Activated B cell treated with CpG ODN at 0.5 μM for 24 hours (primary cell): ENCODE measurements at regions of chr7 and their contacts with region 1.

Region 1: GRCh38 chr7:149838224-149838947 is at the start of gene ZNF862:
- DNase-seq: peak; percentile 89
- ATAC-seq: peak; percentile 97
- H3K4me3 Mint-ChIP-seq: peak within 1 kb of the TSS; percentile 88
- H3K27ac Mint-ChIP-seq: peak within 1 kb of the TSS; percentile 82
- H3K4me1 Mint-ChIP-seq: peaks cover 20% of the 10 kb centered on the region
- H3K27me3 Mint-ChIP-seq: peaks cover 16% of the 10 kb centered on the region
- CTCF ChIP-seq: no peak
- total RNA-seq, gene ZNF862: 12.6 and 17.6 TPM in 2 replicates

Region 2: GRCh38 chr7:149239345-149240191 is 598.8 kb before region 1 on chr7 and contains the start of gene ZNF212:
- CTCF ChIA-PET with region 1: no interaction called
- POLR2A ChIA-PET with region 1: no interaction called
- intact Hi-C with region 1: loop called (anchors 1 kb)
- DNase-seq: peak; percentile 82
- ATAC-seq: peak; percentile 99
- H3K4me3 Mint-ChIP-seq: peak within 1 kb of the TSS; percentile 91
- H3K27ac Mint-ChIP-seq: peak within 1 kb of the TSS; percentile 76
- H3K4me1 Mint-ChIP-seq: peaks cover 37% of the 10 kb centered on the region
- H3K27me3 Mint-ChIP-seq: no peaks in the 10 kb centered on the region
- CTCF ChIP-seq: no peak
- total RNA-seq, gene ZNF212: 17.0 and 21.0 TPM in 2 replicates

Region 3: GRCh38 chr7:149497456-149498261 is 340.7 kb before region 1 on chr7 and contains the start of gene ZNF746:
- CTCF ChIA-PET with region 1: no interaction called
- POLR2A ChIA-PET with region 1: no interaction called
- intact Hi-C with region 1: loop called (anchors 2 kb)
- DNase-seq: peak; percentile 79
- ATAC-seq: peak; percentile 96
- H3K4me3 Mint-ChIP-seq: peak within 1 kb of the TSS; percentile 92
- H3K27ac Mint-ChIP-seq: peak within 1 kb of the TSS; percentile 82
- H3K4me1 Mint-ChIP-seq: peaks cover 24% of the 10 kb centered on the region
- H3K27me3 Mint-ChIP-seq: peaks cover 2% of the 10 kb centered on the region
- CTCF ChIP-seq: no peak
- total RNA-seq, gene ZNF746: 21.0 and 28.4 TPM in 2 replicates

Region 4: GRCh38 chr7:149771721-149772240 is 66.6 kb before region 1 on chr7:
- CTCF ChIA-PET with region 1: no interaction called
- POLR2A ChIA-PET with region 1: interaction called, 8 read pairs
- intact Hi-C with region 1: loop called (anchors 1 kb)
- DNase-seq: peak; percentile 84
- ATAC-seq: peak; percentile 97
- H3K4me3 Mint-ChIP-seq: peak overlapping the region; percentile 80
- H3K27ac Mint-ChIP-seq: no peak overlapping the region
- H3K4me1 Mint-ChIP-seq: no peaks in the 10 kb centered on the region
- H3K27me3 Mint-ChIP-seq: peaks cover 8% of the 10 kb centered on the region
- CTCF ChIP-seq: no peak

Region 5: DNA sequence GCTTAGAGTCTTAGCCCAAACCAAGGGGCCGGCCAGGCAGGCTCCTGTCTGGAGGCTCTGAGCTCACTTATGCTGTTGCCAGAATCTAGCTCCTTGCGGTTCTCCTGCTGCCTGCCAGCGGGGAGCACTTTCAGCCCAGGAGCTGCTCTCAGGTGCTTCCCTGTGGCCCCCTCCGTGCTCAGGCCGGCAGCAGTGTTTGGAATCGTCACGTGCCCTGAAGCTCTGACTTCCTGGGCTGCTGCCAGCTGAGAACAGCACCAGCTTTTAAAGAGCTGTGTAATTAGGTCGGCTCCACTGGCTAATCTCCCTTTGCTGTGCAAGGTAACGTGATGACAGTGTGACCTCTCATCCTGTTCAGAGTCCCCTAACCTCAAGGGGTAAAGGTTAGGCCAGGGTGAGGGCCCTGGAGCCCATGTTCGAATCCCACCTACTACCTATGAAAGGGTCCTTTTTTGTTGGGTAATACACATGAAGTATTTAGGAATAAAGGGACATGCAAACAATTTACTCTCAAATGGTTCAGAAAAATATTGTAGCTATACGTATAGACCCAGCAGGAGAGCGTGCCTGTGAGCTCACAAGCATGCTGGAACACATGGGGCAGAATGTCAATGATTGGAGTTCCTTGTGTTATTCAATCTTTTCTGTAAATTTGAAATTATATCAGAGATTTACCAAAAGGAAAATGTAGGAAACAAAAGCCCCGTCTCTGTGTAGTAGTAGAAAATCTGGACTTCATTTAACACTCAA is 16.4 kb after region 1 on chr7:
- CTCF ChIA-PET with region 1: no interaction called
- POLR2A ChIA-PET with region 1: no interaction called
- intact Hi-C with region 1: no loop called
- DNase-seq: no peak
- ATAC-seq: no peak
- H3K4me3 Mint-ChIP-seq: no peak overlapping the region
- H3K27ac Mint-ChIP-seq: no peak overlapping the region
- H3K4me1 Mint-ChIP-seq: no peaks in the 10 kb centered on the region
- H3K27me3 Mint-ChIP-seq: no peaks in the 10 kb centered on the region
- CTCF ChIP-seq: no peak

Region 6: GRCh38 chr7:150404805-150405583 is 566.6 kb after region 1 on chr7:
- CTCF ChIA-PET with region 1: no interaction called
- POLR2A ChIA-PET with region 1: interaction called, 4 read pairs
- intact Hi-C with region 1: loop called (anchors 2 kb)
- DNase-seq: peak; percentile 78
- ATAC-seq: peak; percentile 36
- H3K4me3 Mint-ChIP-seq: peak overlapping the region; percentile 91
- H3K27ac Mint-ChIP-seq: peak overlapping the region; percentile 99
- H3K4me1 Mint-ChIP-seq: peaks cover 73% of the 10 kb centered on the region
- H3K27me3 Mint-ChIP-seq: no peaks in the 10 kb centered on the region
- CTCF ChIP-seq: no peak

Region 7: GRCh38 chr7:151080522-151081169 is 1242.3 kb after region 1 on chr7 and contains the start of gene FASTK:
- CTCF ChIA-PET with region 1: no interaction called
- POLR2A ChIA-PET with region 1: interaction called, 3 read pairs
- intact Hi-C with region 1: loop called (anchors 1 kb)
- DNase-seq: peak; percentile 81
- ATAC-seq: peak; percentile 83
- H3K4me3 Mint-ChIP-seq: peak within 1 kb of the TSS; percentile 91
- H3K27ac Mint-ChIP-seq: peak within 1 kb of the TSS; percentile 70
- H3K4me1 Mint-ChIP-seq: peaks cover 49% of the 10 kb centered on the region
- H3K27me3 Mint-ChIP-seq: peaks cover 8% of the 10 kb centered on the region
- CTCF ChIP-seq: no peak
- total RNA-seq, gene FASTK: 97.6 and 103 TPM in 2 replicates